Heart left ventricle (tissue), 16 donors: ENCODE measurements at regions of chr10 and their contacts with region 1.

Region 1: GRCh38 chr10:127977357-127978009 is 70.6 kb downstream of the PTPRE start:
- DNase-seq: peak; percentile 82 to 93 (median 88)
- ATAC-seq: peak; percentile 87 to 96 (median 94)
- H3K4me3 ChIP-seq: peak overlapping the region in 10 of 12 donors; percentile 6 to 41 (median 22)
- H3K27ac ChIP-seq: peak overlapping the region; percentile 27 to 86 (median 76)
- H3K4me1 ChIP-seq: peaks cover 9 to 58% (median 34%) of the 10 kb centered on the region in 12 donors
- H3K27me3 ChIP-seq: no peaks in the 10 kb centered on the region
- CTCF ChIP-seq: no peak
- POLR2A ChIP-seq: no peak

Region 2: GRCh38 chr10:127919418-127920271 is 57.8 kb before region 1 on chr10:
- intact Hi-C with region 1: loop called in 3 of 10 experiments (anchors 5 to 10 kb)
- DNase-seq: peak in 1 of 5 donors; percentile 50
- ATAC-seq: peak in 2 of 4 donors; percentile 8 to 40
- H3K4me3 ChIP-seq: no peak overlapping the region
- H3K27ac ChIP-seq: peak overlapping the region in 11 of 12 donors; percentile 48 to 95 (median 82)
- H3K4me1 ChIP-seq: peaks cover 0 to 74% (median 60%) of the 10 kb centered on the region in 12 donors
- H3K27me3 ChIP-seq: no peaks in the 10 kb centered on the region
- CTCF ChIP-seq: peak in 4 of 12 donors; percentile 31 to 36 (median 34)
- POLR2A ChIP-seq: no peak

Region 3: DNA sequence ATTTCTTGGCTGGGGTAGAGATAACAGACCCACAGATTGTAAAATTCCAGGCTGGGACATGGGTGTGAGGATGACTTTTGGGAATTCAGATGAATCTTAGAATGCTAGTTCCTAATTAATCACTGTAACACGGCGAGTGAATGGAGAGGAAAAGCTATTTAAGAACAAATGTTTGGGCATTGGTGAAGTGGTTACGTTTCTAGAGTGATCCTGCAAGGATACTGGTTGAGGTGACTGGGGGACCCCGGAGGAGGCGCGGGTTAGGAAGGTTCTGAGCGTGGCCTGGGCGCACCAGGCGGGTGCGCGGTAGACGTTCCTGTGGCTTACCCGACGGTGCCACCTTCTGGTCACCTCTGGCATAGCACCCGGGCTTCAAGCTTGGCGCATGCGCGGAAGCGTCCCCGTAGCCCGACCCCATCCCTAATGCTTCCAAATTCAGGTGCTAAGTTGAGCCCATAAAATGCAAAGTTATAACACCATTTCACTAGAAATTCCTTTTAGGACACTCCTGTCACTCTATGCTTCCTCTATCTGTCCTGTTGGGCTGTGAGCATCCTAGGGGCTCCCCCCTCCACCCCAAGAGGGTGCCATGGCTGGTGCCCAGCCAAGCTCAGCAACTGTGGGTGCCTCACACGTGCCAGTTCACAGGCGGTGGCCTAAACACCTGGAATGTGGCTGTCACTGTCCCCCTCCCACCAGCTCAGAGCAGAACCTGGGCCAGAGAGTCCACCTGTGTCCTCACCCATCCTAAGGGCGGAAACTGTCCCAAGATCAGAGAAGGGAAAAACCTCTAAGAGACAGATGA is 33.9 kb after region 1 on chr10:
- intact Hi-C with region 1: loop called in 1 of 10 experiments (anchors 1 kb)
- DNase-seq: peak; percentile 83 to 93 (median 86)
- ATAC-seq: peak; percentile 73 to 88 (median 86)
- H3K4me3 ChIP-seq: peak overlapping the region in 2 of 12 donors; percentile 1 to 2
- H3K27ac ChIP-seq: peak overlapping the region in 1 of 12 donors; percentile 39
- H3K4me1 ChIP-seq: peaks cover 0 to 31% (median 17%) of the 10 kb centered on the region in 12 donors
- H3K27me3 ChIP-seq: no peaks in the 10 kb centered on the region
- CTCF ChIP-seq: peak; percentile 98 to 100 (median 99)
- POLR2A ChIP-seq: no peak